GM23248 (cell line): ENCODE measurements at regions of chr19 and their contacts with region 1.

Region 1: DNA sequence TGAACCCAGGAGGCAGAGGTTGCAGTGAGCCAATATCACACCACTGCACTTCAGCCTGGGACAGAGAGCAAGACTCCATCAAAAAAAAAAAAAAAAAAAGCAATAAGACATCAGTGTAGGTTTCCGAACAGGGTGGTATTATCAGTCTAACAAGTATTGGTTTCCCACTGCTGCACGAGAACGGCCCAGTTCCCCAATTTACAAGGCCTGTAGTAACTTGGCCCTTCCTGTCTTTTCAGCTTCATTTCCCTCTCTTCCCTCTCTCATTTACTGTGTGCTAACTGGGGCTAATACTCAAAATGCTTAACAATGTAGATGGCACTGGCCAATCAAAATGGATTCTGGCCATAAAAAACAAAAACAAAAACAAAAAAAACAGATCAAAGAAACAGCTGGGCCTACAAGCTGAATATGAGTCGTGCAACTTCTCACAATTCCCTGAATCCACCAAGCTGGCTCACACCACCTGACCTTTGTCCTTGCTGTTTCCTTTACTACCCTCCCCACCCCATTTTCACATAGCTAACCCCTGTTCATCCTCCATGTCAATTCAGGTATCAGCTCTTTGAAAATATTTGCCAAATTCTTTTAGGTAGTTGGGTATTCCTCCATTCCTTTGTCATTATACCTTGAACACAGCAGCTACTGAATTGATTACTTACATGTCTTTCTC is 2.4 kb downstream of the TEX101 start:
- DNase-seq: no peak
- H3K4me3 ChIP-seq: no peak overlapping the region
- H3K27ac ChIP-seq: no peak overlapping the region
- H3K4me1 ChIP-seq: no peaks in the 10 kb centered on the region
- H3K27me3 ChIP-seq: peaks cover 12% of the 10 kb centered on the region; the same call in 1 of the 2 replicates

Region 2: DNA sequence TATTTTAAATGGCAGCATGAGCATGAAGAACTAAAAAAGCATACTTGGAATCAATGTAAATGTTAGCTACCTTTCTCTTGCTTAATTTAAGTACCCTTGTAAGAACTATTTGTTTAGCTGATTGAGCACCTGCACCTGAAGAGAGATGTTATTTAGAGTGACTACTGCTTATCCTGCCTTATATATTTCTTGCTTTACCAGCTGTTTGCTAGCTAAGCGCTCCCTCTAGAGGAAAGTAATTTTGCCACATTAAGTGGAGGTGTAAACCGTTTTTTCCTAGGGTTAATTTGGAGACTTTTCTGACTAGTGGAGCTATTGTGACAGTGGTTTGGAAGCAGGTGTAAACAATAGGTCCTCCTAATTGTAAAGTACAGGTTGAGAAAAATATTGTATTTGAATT is 315.1 kb before region 1 on chr19:
- in situ Hi-C with region 1: loop called (anchors 10 kb)
- DNase-seq: peak; percentile 29
- H3K4me3 ChIP-seq: no peak overlapping the region
- H3K27ac ChIP-seq: no peak overlapping the region
- H3K4me1 ChIP-seq: peaks cover 18% of the 10 kb centered on the region
- H3K27me3 ChIP-seq: no peaks in the 10 kb centered on the region

Region 3: DNA sequence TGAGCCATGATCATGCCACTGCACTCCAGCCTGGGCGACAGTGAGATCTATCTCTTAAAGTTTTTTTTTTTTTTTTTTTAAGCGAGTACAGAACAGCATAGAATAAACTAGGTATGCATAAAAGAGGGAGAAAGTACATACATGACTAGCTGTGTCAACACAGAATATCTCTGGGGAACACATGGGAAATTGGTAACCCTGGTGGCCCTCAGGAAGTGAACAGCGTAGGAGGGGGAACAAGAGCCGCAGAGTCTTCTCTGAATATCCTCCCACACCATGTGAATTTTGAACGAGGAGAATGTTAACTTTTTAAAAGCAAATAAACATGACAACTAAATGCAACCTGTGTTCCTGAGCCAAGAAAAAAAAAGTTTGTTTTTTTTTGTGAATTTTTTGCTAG is 72.2 kb after region 1 on chr19:
- in situ Hi-C with region 1: no loop called
- DNase-seq: no peak
- H3K4me3 ChIP-seq: no peak overlapping the region
- H3K27ac ChIP-seq: no peak overlapping the region
- H3K4me1 ChIP-seq: no peaks in the 10 kb centered on the region
- H3K27me3 ChIP-seq: no peaks in the 10 kb centered on the region